ENCODE measurements at regions of chr11 and their contacts with region 1.

Region 1: DNA sequence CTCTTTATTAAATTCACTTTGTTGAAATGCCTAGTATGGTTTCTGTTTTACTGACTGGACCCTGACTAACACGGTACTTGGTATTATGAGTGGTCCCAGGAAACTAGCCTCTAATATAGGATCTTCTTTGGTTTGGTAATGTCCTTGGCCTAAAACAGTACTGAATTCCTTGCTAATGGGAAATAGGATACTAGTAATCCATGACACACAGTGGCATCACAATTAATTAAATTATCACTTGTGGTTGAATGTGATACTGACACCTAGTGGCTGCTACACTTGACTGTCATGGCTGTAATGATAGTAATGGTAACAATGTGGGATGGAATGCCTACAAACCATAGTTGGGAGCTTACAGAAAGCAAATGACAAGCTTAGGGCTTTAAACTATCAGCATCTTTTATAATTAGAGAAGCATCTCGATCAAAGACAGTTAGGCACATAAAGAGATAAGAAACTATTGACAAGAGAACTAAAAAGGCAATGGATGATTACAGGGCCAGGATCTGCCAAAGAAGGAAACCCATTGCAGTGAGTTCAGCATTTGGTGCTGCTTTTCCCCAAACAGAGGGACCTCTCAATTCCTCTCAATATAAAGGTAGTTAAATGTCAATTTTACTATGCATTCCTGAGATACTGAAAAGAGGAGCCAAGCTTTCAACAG is 8.6 kb downstream of the DNHD1 start:
- DNase-seq: no peak
- H3K4me3 ChIP-seq: no peak overlapping the region
- CTCF ChIP-seq: no peak
- POLR2A ChIP-seq: no peak

Region 2: GRCh38 chr11:6156628-6157359 is 348.9 kb before region 1 on chr11:
- intact Hi-C with region 1: no loop called
- DNase-seq: no peak
- H3K4me3 ChIP-seq: no peak overlapping the region
- CTCF ChIP-seq: no peak
- POLR2A ChIP-seq: no peak

Region 3: DNA sequence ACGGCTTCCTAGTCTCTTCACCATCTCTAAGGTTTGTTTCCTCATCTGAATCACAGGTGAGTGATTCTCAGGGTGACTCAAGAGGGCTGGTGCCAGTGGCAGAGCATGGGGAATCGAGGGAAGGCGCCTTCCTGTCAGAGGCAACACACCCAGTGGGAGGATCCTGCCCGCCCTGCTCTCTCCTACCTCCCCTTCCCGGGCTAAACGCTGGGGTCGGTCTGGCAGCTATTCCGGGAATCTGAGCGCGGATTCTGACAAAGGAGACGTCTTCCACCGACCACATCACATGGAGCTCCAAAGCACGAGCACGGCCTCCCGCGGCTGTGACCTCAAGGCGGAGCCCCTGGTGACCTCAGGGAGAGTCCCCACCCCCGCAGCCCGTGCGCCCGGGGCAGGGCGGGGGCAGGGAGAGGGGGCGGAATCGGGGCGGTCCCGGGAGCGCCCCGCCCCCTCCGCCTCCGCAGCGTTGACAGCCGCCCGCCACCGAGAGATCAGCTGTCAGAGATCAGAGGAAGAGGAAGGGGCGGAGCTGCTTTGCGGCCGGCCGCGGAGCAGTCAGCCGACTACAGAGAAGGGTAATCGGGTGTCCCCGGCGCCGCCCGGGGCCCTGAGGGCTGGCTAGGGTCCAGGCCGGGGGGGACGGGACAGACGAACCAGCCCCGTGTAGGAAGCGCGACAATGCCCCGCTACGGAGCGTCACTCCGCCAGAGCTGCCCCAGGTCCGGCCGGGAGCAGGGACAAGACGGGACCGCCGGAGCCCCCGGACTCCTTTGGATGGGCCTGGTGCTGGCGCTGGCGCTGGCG is 115.6 kb before region 1 on chr11 and contains the start of gene SMPD1:
- intact Hi-C with region 1: loop called (anchors 10 kb)
- DNase-seq: peak; percentile 93 to 98
- H3K4me3 ChIP-seq: peak within 1 kb of the TSS; percentile 53
- CTCF ChIP-seq: no peak
- POLR2A ChIP-seq: no peak
- total RNA-seq, gene SMPD1: 49.2 to 91.6 (median 63.6) TPM

Measured in lower leg skin (tissue), 4 donors.